ENCODE measurements at regions of chr19 and their contacts with region 1.

Region 1: DNA sequence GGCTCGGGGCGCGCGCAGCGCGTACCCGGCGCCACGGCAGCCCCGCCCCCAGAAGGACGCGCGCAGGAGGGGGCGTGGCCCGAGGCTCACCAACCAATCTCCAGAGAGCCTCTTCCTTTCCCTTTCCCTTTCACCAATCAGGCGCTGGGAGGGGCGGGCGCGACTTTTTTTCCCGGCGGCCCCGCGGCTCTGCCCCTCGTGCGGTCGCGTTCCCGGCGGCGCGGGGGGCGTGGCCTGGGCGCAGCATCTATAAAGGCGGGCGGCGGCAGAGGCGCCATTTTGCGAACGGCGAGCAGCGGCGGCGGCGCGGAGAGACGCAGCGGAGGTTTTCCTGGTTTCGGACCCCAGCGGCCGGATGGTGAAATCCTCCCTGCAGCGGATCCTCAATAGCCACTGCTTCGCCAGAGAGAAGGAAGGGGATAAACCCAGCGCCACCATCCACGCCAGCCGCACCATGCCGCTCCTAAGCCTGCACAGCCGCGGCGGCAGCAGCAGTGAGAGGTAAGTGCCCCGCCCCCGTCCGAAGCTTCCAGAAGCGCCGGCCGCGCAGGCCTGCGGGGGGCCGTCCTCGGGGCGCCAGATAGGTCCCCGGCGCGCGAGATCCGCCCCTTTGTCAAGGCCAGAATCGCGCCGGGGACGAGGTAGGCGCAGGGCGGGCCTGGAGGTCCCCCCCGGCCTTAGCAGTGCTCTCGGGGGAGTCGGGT is 12.6 kb downstream of the PEAK3 start:
- DNase-seq: peak; percentile 95 to 99 (median 98)
- H3K4me3 ChIP-seq: peak overlapping the region; percentile 54 to 100 (median 98)
- H3K27ac ChIP-seq: peak overlapping the region; percentile 86 to 99 (median 98)
- H3K27me3 ChIP-seq: no peaks in the 10 kb centered on the region
- CTCF ChIP-seq: peak in 40 of 56 donors; percentile 11 to 50 (median 32)

Region 2: GRCh38 chr19:1855040-1855827 is 414.2 kb before region 1 on chr19:
- intact Hi-C with region 1: no loop called
- DNase-seq: peak in 7 of 10 donors; percentile 40 to 81 (median 52)
- H3K4me3 ChIP-seq: peak overlapping the region in 49 of 59 donors; percentile 8 to 70 (median 56)
- H3K27ac ChIP-seq: peak overlapping the region in 55 of 59 donors; percentile 16 to 92 (median 84)
- H3K27me3 ChIP-seq: no peaks in the 10 kb centered on the region
- CTCF ChIP-seq: peak in 3 of 56 donors; percentile 9 to 13 (median 13)

Region 3: GRCh38 chr19:2050991-2051772 is 218.2 kb before region 1 on chr19 and contains the start of gene MKNK2:
- intact Hi-C with region 1: no loop called
- DNase-seq: peak; percentile 84 to 98 (median 92)
- H3K4me3 ChIP-seq: peak within 1 kb of the TSS; percentile 67 to 97 (median 90)
- H3K27ac ChIP-seq: peak within 1 kb of the TSS; percentile 83 to 99 (median 96)
- H3K27me3 ChIP-seq: no peaks in the 10 kb centered on the region
- CTCF ChIP-seq: peak; percentile 23 to 95 (median 82)
- total RNA-seq, gene MKNK2: 40.9 to 364 (median 77.4) TPM

Region 4: GRCh38 chr19:2157452-2157851 is 111.9 kb before region 1 on chr19:
- intact Hi-C with region 1: loop called (anchors 2 kb)
- DNase-seq: no peak
- H3K4me3 ChIP-seq: no peak overlapping the region
- H3K27ac ChIP-seq: no peak overlapping the region
- H3K27me3 ChIP-seq: no peaks in the 10 kb centered on the region
- CTCF ChIP-seq: no peak

Region 5: GRCh38 chr19:2199215-2199614 is 70.2 kb before region 1 on chr19:
- intact Hi-C with region 1: no loop called
- DNase-seq: no peak
- H3K4me3 ChIP-seq: no peak overlapping the region
- H3K27ac ChIP-seq: peak overlapping the region in 3 of 59 donors; percentile 0 to 27 (median 4)
- H3K27me3 ChIP-seq: no peaks in the 10 kb centered on the region
- CTCF ChIP-seq: peak in 26 of 56 donors; percentile 8 to 53 (median 22)

Region 6: GRCh38 chr19:2385053-2385721 is 115.8 kb after region 1 on chr19:
- intact Hi-C with region 1: loop called in 1 of 2 experiments (anchors 2 kb)
- DNase-seq: peak in 3 of 10 donors; percentile 7 to 50 (median 20)
- H3K4me3 ChIP-seq: peak overlapping the region in 6 of 59 donors; percentile 7 to 30 (median 13)
- H3K27ac ChIP-seq: no peak overlapping the region
- H3K27me3 ChIP-seq: peaks cover 0 to 9% (median 0%) of the 10 kb centered on the region in 45 donors
- CTCF ChIP-seq: no peak

Measured in dorsolateral prefrontal cortex (tissue), 120 donors.